ENCODE measurements at regions of chr15 and their contacts with region 1.

Region 1: GRCh38 chr15:40217159-40217824 is 21.6 kb upstream of the PAK6 start:
- DNase-seq: peak; percentile 52
- ATAC-seq: peak; percentile 93
- H3K4me3 Mint-ChIP-seq: no peak overlapping the region
- H3K27ac Mint-ChIP-seq: no peak overlapping the region
- H3K4me1 Mint-ChIP-seq: no peaks in the 10 kb centered on the region
- H3K27me3 Mint-ChIP-seq: no peaks in the 10 kb centered on the region
- CTCF ChIP-seq: peak; percentile 84

Region 2: GRCh38 chr15:40044717-40045571 is 172.3 kb before region 1 on chr15:
- CTCF ChIA-PET with region 1: interaction called, 18 read pairs
- POLR2A ChIA-PET with region 1: interaction called, 3 read pairs
- intact Hi-C with region 1: no loop called
- DNase-seq: peak; percentile 95
- ATAC-seq: peak; percentile 85
- H3K4me3 Mint-ChIP-seq: peak overlapping the region; percentile 9
- H3K27ac Mint-ChIP-seq: peak overlapping the region; percentile 85
- H3K4me1 Mint-ChIP-seq: peaks cover 85% of the 10 kb centered on the region
- H3K27me3 Mint-ChIP-seq: no peaks in the 10 kb centered on the region
- CTCF ChIP-seq: peak; percentile 96

Region 3: DNA sequence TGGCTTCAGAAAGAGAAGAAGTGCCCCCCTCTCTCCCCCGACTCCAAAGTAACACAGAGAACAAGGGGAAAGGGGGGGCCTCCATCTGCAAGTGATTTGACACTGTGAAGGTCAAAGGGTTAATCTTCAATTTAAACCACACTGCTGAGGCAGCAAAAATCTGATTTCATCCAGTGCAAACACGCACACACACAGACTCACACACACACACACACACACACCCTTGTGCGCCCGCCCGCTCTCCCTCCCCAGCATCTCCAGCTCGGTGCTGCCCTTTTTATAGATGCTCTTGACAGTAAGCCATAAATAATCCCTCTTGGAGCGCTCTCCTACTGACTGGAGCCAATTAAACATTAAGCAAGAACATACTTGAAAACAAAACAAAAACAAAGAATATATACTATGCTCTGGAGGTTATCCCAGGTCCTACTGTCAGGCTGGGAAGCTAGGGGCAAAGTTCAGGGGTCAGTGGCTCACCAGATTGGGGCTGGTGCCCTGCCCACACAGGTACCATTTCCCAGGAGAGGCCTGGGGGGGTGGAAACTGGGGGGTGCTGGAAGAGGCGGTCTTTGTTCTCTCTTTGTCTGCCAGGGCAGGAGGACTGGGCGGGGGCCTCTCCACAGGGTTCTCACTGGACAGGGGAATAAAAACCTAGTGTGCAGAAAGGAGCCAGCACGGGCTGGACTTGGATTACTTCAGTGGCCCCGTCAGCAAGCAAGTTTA is 124.9 kb before region 1 on chr15:
- CTCF ChIA-PET with region 1: no interaction called
- POLR2A ChIA-PET with region 1: no interaction called
- intact Hi-C with region 1: no loop called
- DNase-seq: no peak
- ATAC-seq: no peak
- H3K4me3 Mint-ChIP-seq: no peak overlapping the region
- H3K27ac Mint-ChIP-seq: no peak overlapping the region
- H3K4me1 Mint-ChIP-seq: peaks cover 27% of the 10 kb centered on the region
- H3K27me3 Mint-ChIP-seq: no peaks in the 10 kb centered on the region
- CTCF ChIP-seq: no peak

Region 4: GRCh38 chr15:40204100-40204499 is 13.2 kb before region 1 on chr15:
- CTCF ChIA-PET with region 1: interaction called, 10 read pairs
- POLR2A ChIA-PET with region 1: no interaction called
- intact Hi-C with region 1: no loop called
- DNase-seq: no peak
- ATAC-seq: no peak
- H3K4me3 Mint-ChIP-seq: no peak overlapping the region
- H3K27ac Mint-ChIP-seq: no peak overlapping the region
- H3K4me1 Mint-ChIP-seq: no peaks in the 10 kb centered on the region
- H3K27me3 Mint-ChIP-seq: no peaks in the 10 kb centered on the region
- CTCF ChIP-seq: no peak

Region 5: GRCh38 chr15:40307421-40308211 is 90.3 kb after region 1 on chr15 and contains the start of gene PLCB2:
- CTCF ChIA-PET with region 1: interaction called, 22 read pairs
- POLR2A ChIA-PET with region 1: no interaction called
- intact Hi-C with region 1: no loop called
- DNase-seq: peak; percentile 84
- ATAC-seq: peak; percentile 78
- H3K4me3 Mint-ChIP-seq: peak within 1 kb of the TSS; percentile 95
- H3K27ac Mint-ChIP-seq: peak within 1 kb of the TSS; percentile 97
- H3K4me1 Mint-ChIP-seq: peaks cover 36% of the 10 kb centered on the region
- H3K27me3 Mint-ChIP-seq: no peaks in the 10 kb centered on the region
- CTCF ChIP-seq: peak; percentile 35
- total RNA-seq, gene PLCB2: 44.6 to 58.8 TPM

Measured in activated CD8-positive, alpha-beta T cell treated with anti-CD3 and anti-CD28 coated beads for 36 hours (primary cell).